Activated T-helper 1 cell treated with anti-CD3 and anti-CD28 coated beads, Interleukin-12 subunit alpha, Interleukin-12 subunit beta, Interleukin-2, Interleukin-4 antibody, amounts not matched to agents 30 ng/mL and 10 ng/mL and 1 ng/mL, durations not matched to agents 14 hours and 24 hours and 36 hours (primary cell): ENCODE measurements at regions of chr10 and their contacts with region 1.

Region 1: GRCh38 chr10:48306265-48306869 is at the start of gene MAPK8:
- DNase-seq: peak; percentile 88
- H3K4me3 Mint-ChIP-seq: peak within 1 kb of the TSS; percentile 85
- H3K27ac Mint-ChIP-seq: peak within 1 kb of the TSS; percentile 68
- H3K4me1 Mint-ChIP-seq: peaks cover 19% of the 10 kb centered on the region
- H3K27me3 Mint-ChIP-seq: peaks cover 17% of the 10 kb centered on the region
- total RNA-seq, gene MAPK8: 51.6 and 52.3 TPM in 2 replicates

Region 2: GRCh38 chr10:48336978-48337599 is 30.7 kb after region 1 on chr10:
- intact Hi-C with region 1: loop called (anchors 2 kb)
- DNase-seq: no peak
- H3K4me3 Mint-ChIP-seq: no peak overlapping the region
- H3K27ac Mint-ChIP-seq: no peak overlapping the region
- H3K4me1 Mint-ChIP-seq: peaks cover 21% of the 10 kb centered on the region
- H3K27me3 Mint-ChIP-seq: no peaks in the 10 kb centered on the region

Region 3: DNA sequence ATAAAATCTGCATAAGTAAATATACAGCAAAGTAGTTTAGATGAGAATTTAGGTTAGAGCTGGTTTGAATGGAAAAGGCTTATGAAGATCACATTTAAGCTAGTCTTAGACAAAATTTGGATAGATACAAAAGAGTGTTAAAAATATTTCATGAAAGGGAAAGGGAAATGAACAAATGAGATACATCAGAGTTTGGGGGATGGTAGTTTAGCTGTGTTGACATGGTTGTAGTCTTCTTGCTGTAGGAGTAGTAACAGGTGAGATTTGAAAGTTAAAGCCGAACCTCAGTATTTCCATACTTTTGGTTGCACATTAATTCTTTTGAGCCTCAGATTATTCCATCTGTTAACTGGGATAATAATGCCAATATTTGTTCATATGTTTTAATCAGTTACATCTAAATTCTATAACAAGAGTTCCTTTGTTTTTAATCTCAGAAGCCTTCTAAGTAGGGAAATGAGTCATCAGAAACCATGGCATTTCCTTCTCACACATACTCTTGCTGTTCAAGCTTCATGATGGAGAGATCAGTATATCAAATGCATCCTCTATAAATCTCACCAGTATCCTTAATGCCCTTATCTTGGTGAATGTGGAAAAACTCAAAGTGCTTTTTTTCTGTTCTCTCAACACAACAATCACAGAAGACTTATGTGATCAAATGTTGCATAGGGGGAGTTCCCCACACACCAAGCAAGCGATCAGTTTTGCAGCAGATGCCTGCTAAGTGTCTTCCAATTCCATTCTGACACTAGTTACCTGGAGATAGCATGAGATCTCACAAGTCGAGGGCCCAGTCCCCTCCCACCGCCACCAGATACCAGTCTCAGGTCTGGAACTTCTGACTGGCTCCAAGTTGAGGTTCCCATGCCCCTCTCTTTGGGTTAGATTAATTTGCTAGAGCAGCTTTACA is 84.8 kb after region 1 on chr10:
- intact Hi-C with region 1: loop called (anchors 5 kb)
- DNase-seq: no peak
- H3K4me3 Mint-ChIP-seq: peak overlapping the region; percentile 6
- H3K27ac Mint-ChIP-seq: no peak overlapping the region
- H3K4me1 Mint-ChIP-seq: peaks cover 41% of the 10 kb centered on the region
- H3K27me3 Mint-ChIP-seq: peaks cover 4% of the 10 kb centered on the region

Region 4: DNA sequence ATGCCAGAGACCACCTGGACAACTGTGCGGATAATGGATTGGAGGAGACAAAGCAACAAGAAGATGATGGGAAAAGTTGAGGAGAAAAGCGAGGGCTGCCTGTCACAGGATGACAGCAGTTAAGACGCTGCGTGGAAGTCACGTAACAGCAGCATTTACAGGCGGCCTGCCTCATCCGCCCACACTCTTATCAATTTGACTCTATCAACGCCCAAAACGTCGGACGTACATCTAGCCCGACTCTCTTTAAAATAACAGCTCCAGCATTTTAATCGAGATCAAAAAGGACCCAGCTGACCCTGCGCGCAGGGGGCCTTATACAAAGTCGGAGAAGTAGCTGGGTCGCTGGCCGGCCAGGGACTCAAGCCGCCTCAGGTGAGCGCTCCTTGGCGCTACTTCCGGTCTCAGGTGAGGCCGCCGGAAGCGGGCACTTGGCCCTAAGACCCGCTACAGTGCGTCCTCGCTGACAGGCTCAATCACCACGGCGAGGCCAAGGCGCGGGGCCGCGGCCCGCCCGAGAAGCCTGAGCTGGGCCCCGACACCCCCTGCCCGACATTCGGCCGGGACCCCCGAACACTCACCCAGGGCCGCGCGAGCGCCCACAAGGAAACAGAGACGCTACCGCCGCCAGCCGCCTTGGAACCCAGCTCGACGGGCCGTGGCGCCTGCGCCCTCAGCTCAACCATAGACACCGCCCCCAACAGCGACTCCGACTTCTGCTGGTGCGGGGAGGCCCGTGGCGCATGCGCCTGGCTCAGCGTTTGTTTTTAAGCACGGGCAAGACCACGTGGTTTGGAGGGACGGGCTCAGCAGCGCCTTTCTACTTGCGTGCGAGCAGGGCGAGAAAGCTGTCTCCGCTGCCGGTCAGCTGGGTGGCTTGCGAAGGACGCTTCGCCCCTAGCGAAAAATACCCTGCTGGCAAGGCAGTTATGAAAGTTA is 1232.3 kb after region 1 on chr10 and contains the start of gene ERCC6:
- intact Hi-C with region 1: loop called (anchors 2 kb)
- DNase-seq: peak; percentile 95
- H3K4me3 Mint-ChIP-seq: peak within 1 kb of the TSS; percentile 92
- H3K27ac Mint-ChIP-seq: peak within 1 kb of the TSS; percentile 96
- H3K4me1 Mint-ChIP-seq: peaks cover 34% of the 10 kb centered on the region
- H3K27me3 Mint-ChIP-seq: peaks cover 2% of the 10 kb centered on the region
- total RNA-seq, gene ERCC6: 11.2 and 11.7 TPM in 2 replicates